Heart left ventricle (tissue), 16 donors: ENCODE measurements at regions of chr6 and their contacts with region 1.

Region 1: DNA sequence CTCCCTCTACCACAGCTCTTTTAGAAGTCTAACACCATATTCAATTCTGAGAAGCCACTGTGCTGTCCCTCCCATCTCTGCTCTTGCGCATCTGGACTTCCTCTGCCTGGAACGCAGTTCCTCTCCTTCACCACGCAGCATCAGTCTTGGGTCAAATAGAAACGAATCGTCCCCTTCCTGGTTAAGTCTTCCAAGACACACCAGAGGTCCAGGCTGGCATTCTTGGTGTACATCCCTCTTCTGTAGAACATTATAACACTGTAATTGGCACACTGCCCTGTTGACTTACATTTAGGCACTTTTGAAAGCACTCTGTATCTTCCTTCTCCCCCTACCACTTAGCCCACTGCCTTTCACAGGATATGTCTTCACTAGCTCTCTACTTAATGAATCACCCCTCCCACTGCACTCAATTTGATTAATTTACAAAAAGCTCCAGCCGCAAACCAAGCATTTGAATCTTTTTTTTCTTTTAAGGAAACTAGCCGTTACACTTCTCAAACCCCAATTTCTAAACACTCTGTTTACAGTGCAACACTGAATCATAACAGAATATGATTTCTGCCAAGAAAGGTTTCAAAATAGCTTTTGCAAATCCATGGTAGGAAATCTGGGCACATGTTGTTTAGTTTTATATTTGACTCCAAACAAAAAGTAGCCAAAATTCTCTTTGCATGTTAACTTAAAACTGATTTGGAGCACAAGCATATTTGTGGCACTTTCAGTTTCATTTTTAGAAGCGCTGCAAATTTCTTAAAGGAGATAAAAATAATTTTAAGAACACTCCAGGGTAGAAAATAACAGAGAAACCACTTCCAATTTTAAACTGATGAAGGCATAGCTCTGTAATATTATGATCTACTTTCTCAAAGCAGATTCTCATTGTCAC is 140.7 kb upstream of the CARMIL1 start:
- DNase-seq: peak in 4 of 5 donors; percentile 63 to 77 (median 71)
- ATAC-seq: peak; percentile 74 to 95 (median 92)
- H3K4me3 ChIP-seq: peak overlapping the region; percentile 16 to 64 (median 52)
- H3K27ac ChIP-seq: peak overlapping the region; percentile 78 to 96 (median 88)
- H3K4me1 ChIP-seq: peaks cover 0 to 29% (median 12%) of the 10 kb centered on the region in 12 donors
- H3K27me3 ChIP-seq: no peaks in the 10 kb centered on the region
- CTCF ChIP-seq: peak in 4 of 12 donors; percentile 8 to 40 (median 26)
- POLR2A ChIP-seq: peak in 1 of 2 donors; percentile 67

Region 2: GRCh38 chr6:24960991-24961475 is 177.4 kb before region 1 on chr6:
- intact Hi-C with region 1: no loop called
- DNase-seq: no peak
- ATAC-seq: no peak
- H3K4me3 ChIP-seq: no peak overlapping the region
- H3K27ac ChIP-seq: peak overlapping the region in 1 of 12 donors; percentile 23
- H3K4me1 ChIP-seq: peaks cover 0 to 14% (median 0%) of the 10 kb centered on the region in 12 donors
- H3K27me3 ChIP-seq: no peaks in the 10 kb centered on the region
- CTCF ChIP-seq: no peak
- POLR2A ChIP-seq: no peak

Region 3: DNA sequence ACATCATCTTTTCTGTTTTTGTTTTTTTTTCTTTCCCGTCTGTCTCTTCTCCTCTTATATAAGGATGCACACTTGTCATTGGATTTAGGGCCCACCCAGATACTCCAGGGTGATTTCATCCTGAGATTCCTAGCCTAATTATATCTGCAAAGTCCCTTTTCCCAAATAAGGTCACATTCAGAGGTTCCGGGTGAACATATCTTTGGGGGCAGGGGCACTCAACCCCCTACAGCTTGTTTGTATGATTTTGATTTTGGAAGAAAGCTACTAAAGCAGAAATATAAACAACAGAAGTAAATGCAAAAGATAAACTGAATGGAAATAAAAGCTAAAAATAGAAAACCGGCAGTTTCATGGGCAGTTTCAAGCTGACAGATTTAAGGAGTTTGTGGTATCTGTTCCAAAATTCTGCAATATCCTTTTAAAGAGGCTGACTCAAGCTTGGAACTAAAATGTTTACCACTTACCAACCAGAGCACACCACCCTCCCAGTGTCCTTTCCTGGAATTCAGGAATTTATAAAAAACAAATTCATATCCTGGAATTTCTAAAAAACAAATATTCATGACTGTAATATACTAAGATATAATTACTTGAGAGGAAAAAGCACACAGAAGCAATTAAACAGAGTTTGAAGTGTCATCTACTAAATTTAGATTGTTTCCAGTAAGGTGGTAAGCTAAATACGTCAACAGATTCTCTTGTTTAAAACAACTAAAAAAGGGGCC is 40.7 kb after region 1 on chr6:
- intact Hi-C with region 1: loop called in 4 of 10 experiments (anchors 1 to 5 kb)
- DNase-seq: no peak
- ATAC-seq: peak; percentile 62 to 74 (median 68)
- H3K4me3 ChIP-seq: no peak overlapping the region
- H3K27ac ChIP-seq: peak overlapping the region; percentile 57 to 82 (median 69)
- H3K4me1 ChIP-seq: peaks cover 0 to 58% (median 8%) of the 10 kb centered on the region in 12 donors
- H3K27me3 ChIP-seq: no peaks in the 10 kb centered on the region
- CTCF ChIP-seq: no peak
- POLR2A ChIP-seq: no peak

Region 4: GRCh38 chr6:25193460-25194171 is 55.1 kb after region 1 on chr6:
- intact Hi-C with region 1: loop called in 1 of 10 experiments (anchors 5 kb)
- DNase-seq: peak in 3 of 5 donors; percentile 33 to 55 (median 50)
- ATAC-seq: peak in 3 of 4 donors; percentile 47 to 79 (median 71)
- H3K4me3 ChIP-seq: peak overlapping the region in 3 of 12 donors; percentile 3 to 13 (median 12)
- H3K27ac ChIP-seq: peak overlapping the region; percentile 54 to 87 (median 74)
- H3K4me1 ChIP-seq: peaks cover 0 to 26% (median 8%) of the 10 kb centered on the region in 12 donors
- H3K27me3 ChIP-seq: no peaks in the 10 kb centered on the region
- CTCF ChIP-seq: no peak
- POLR2A ChIP-seq: no peak